ENCODE measurements at regions of chr2 and their contacts with region 1.

Region 1: GRCh38 chr2:158006961-158007719 is 94.5 kb upstream of the UPP2 start:
- DNase-seq: no peak
- H3K4me3 ChIP-seq: no peak overlapping the region
- H3K4me3 Mint-ChIP-seq: no peak overlapping the region
- H3K27ac ChIP-seq: no peak overlapping the region
- H3K27ac Mint-ChIP-seq: peak overlapping the region in 1 of 7 donors; percentile 15
- H3K4me1 ChIP-seq: no peaks in the 10 kb centered on the region
- H3K4me1 Mint-ChIP-seq: peaks cover 3 to 6% (median 5%) of the 10 kb centered on the region in 4 donors
- H3K27me3 ChIP-seq: no peaks in the 10 kb centered on the region
- H3K27me3 Mint-ChIP-seq: peaks cover 1 to 6% of the 10 kb centered on the region in 2 donors

Region 2: GRCh38 chr2:157497638-157498314 is 509.4 kb before region 1 on chr2:
- CTCF ChIA-PET with region 1: interaction called, 19 read pairs
- POLR2A ChIA-PET with region 1: no interaction called
- intact Hi-C with region 1: loop called (anchors 1 kb)
- DNase-seq: peak; percentile 35 to 52 (median 40)
- H3K4me3 ChIP-seq: no peak overlapping the region
- H3K4me3 Mint-ChIP-seq: no peak overlapping the region
- H3K27ac ChIP-seq: no peak overlapping the region
- H3K27ac Mint-ChIP-seq: no peak overlapping the region
- H3K4me1 ChIP-seq: peaks cover under 1% of the 10 kb centered on the region
- H3K4me1 Mint-ChIP-seq: peaks cover 6 to 13% (median 11%) of the 10 kb centered on the region in 4 donors
- H3K27me3 ChIP-seq: no peaks in the 10 kb centered on the region
- H3K27me3 Mint-ChIP-seq: peaks cover 0 to 3% of the 10 kb centered on the region in 2 donors

Region 3: GRCh38 chr2:157628477-157629415 is 378.4 kb before region 1 on chr2 and contains the start of gene ACVR1C:
- CTCF ChIA-PET with region 1: interaction called, 5 read pairs
- POLR2A ChIA-PET with region 1: no interaction called
- intact Hi-C with region 1: loop called (anchors 1 kb)
- DNase-seq: peak; percentile 70 to 81 (median 75)
- H3K4me3 ChIP-seq: peak within 1 kb of the TSS; percentile 45 to 68
- H3K4me3 Mint-ChIP-seq: peak within 1 kb of the TSS; percentile 92 to 98 (median 95)
- H3K27ac ChIP-seq: peak within 1 kb of the TSS; percentile 58
- H3K27ac Mint-ChIP-seq: peak within 1 kb of the TSS; percentile 85 to 94 (median 89)
- H3K4me1 ChIP-seq: peaks cover 39% of the 10 kb centered on the region
- H3K4me1 Mint-ChIP-seq: peaks cover 22 to 48% (median 33%) of the 10 kb centered on the region in 4 donors
- H3K27me3 ChIP-seq: no peaks in the 10 kb centered on the region
- H3K27me3 Mint-ChIP-seq: peaks cover 0 to 2% of the 10 kb centered on the region in 2 donors
- total RNA-seq, gene ACVR1C: 6.3 to 6.9 TPM

Region 4: DNA sequence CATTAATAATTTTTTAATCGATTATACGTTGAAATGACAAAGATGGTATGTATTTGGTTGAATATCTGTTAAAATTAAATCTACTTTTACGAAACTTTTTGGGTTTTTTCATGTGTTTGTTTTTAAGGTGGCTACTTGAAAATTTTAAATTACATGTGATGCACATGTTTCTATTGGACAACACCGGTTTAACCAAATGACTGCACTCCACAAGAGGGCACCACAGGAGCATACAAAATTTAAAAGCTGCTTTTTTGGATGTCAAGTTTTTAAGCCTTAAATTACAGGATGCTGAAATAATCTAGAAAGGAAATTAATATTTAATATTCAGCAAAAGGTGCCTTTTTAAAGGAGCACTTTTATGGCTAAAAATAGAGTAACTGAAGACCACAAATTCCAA is 229.7 kb before region 1 on chr2:
- CTCF ChIA-PET with region 1: interaction called, 23 read pairs
- POLR2A ChIA-PET with region 1: no interaction called
- intact Hi-C with region 1: loop called (anchors 1 kb)
- DNase-seq: peak in 4 of 5 donors; percentile 35 to 49 (median 37)
- H3K4me3 ChIP-seq: no peak overlapping the region
- H3K4me3 Mint-ChIP-seq: no peak overlapping the region
- H3K27ac ChIP-seq: no peak overlapping the region
- H3K27ac Mint-ChIP-seq: no peak overlapping the region
- H3K4me1 ChIP-seq: no peaks in the 10 kb centered on the region
- H3K4me1 Mint-ChIP-seq: peaks cover 8 to 13% (median 8%) of the 10 kb centered on the region in 4 donors
- H3K27me3 ChIP-seq: no peaks in the 10 kb centered on the region
- H3K27me3 Mint-ChIP-seq: no peaks in the 10 kb centered on the region

Region 5: GRCh38 chr2:157784169-157784822 is 222.8 kb before region 1 on chr2:
- CTCF ChIA-PET with region 1: interaction called, 23 read pairs
- POLR2A ChIA-PET with region 1: no interaction called
- intact Hi-C with region 1: no loop called
- DNase-seq: peak in 3 of 5 donors; percentile 8 to 15 (median 10)
- H3K4me3 ChIP-seq: no peak overlapping the region
- H3K4me3 Mint-ChIP-seq: peak overlapping the region in 6 of 8 donors; percentile 23 to 43 (median 26)
- H3K27ac ChIP-seq: no peak overlapping the region
- H3K27ac Mint-ChIP-seq: peak overlapping the region; percentile 37 to 87 (median 71)
- H3K4me1 ChIP-seq: peaks cover 25% of the 10 kb centered on the region
- H3K4me1 Mint-ChIP-seq: peaks cover 32 to 62% (median 40%) of the 10 kb centered on the region in 4 donors
- H3K27me3 ChIP-seq: no peaks in the 10 kb centered on the region
- H3K27me3 Mint-ChIP-seq: no peaks in the 10 kb centered on the region

Region 6: GRCh38 chr2:158024288-158024898 is 17.3 kb after region 1 on chr2:
- CTCF ChIA-PET with region 1: interaction called, 42 read pairs
- POLR2A ChIA-PET with region 1: no interaction called
- intact Hi-C with region 1: no loop called
- DNase-seq: peak in 4 of 5 donors; percentile 28 to 45 (median 37)
- H3K4me3 ChIP-seq: no peak overlapping the region
- H3K4me3 Mint-ChIP-seq: no peak overlapping the region
- H3K27ac ChIP-seq: no peak overlapping the region
- H3K27ac Mint-ChIP-seq: no peak overlapping the region
- H3K4me1 ChIP-seq: peaks cover 10% of the 10 kb centered on the region
- H3K4me1 Mint-ChIP-seq: peaks cover 4 to 10% (median 7%) of the 10 kb centered on the region in 4 donors
- H3K27me3 ChIP-seq: no peaks in the 10 kb centered on the region
- H3K27me3 Mint-ChIP-seq: peaks cover 0 to 2% of the 10 kb centered on the region in 2 donors

Measured in CD4-positive, alpha-beta memory T cell (primary cell).